ENCODE measurements at regions of chr6 and their contacts with region 1.

Region 1: DNA sequence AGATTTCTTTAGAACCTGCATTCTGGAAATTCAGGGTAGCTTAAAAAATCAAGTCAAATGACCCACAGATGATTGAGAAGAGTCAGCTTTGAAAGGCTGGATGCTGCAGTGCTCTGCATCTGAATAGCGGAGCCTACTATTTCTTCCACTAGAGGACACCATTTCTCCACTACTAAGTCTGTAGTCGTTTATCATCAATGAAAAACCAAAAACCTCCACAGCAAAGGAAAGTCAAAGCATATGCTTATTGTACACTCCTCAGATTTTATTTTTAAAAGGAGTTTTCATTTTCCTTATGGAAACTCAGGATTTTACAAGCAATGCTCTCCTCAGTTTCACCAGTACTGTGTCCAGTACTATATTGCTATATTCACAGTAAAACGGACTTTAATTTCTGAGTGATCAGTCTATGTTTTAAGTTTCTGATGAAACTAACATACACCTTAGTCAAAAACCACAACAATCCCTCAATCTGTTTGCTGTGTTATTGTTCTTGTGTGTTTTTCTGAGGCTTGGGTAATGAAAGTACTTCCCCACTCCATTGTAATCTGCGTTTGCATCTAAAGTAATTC is 50.5 kb upstream of the ENPP5 start:
- DNase-seq: no peak
- H3K4me3 ChIP-seq: no peak overlapping the region; a peak in 1 of 4 replicates
- H3K27ac ChIP-seq: no peak overlapping the region
- H3K4me1 ChIP-seq: no peaks in the 10 kb centered on the region
- H3K27me3 ChIP-seq: peaks cover 11% of the 10 kb centered on the region; the same call in 1 of the 2 replicates
- CTCF ChIP-seq: peak; percentile 77
- EP300 ChIP-seq: no peak
- RAD21 ChIP-seq: peak; percentile 69

Region 2: DNA sequence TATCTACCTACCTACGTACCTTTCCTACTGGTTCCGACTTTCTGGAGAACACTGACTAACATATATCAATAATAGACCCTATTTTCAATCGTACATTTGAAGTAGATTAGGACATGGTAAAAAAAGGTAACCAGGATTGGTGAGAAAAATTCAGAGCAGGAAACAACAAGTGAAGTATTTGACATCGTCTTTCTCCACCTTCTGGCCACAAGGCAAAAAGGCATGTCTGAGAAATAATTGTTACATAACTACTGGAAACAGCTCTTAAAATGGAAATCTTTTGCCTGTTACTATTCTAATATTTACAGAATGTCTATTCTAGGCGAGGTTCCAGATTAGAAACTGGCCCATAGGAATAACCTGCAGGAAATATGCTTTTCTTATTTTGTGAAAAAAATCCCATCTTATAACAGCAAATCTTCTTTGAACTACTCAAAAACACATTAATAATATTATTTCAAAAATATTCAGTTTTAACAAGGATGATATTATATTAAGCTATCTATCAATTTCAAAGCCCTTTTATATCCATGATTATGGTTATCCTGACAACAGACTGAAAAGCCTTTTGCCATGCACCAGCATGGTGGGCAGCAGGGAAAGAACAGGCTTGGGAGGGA is 189.1 kb after region 1 on chr6:
- CTCF ChIA-PET with region 1: interaction called, 17 read pairs
- POLR2A ChIA-PET with region 1: no interaction called
- DNase-seq: peak; percentile 34
- H3K4me3 ChIP-seq: no peak overlapping the region
- H3K27ac ChIP-seq: no peak overlapping the region
- H3K4me1 ChIP-seq: no peaks in the 10 kb centered on the region
- H3K27me3 ChIP-seq: peaks cover 18% of the 10 kb centered on the region; the same call in 1 of the 2 replicates
- CTCF ChIP-seq: peak; percentile 86
- EP300 ChIP-seq: no peak
- RAD21 ChIP-seq: peak; percentile 81

Measured in SK-N-SH (cell line).